ENCODE measurements at regions of chr10 and their contacts with region 1.

Region 1: GRCh38 chr10:128069351-128070051 is 56.7 kb downstream of the MKI67 start:
- DNase-seq: peak; percentile 64 to 89 (median 82)
- ATAC-seq: peak; percentile 36
- H3K4me3 ChIP-seq: no peak overlapping the region
- H3K4me3 Mint-ChIP-seq: no peak overlapping the region
- H3K27ac ChIP-seq: no peak overlapping the region
- H3K27ac Mint-ChIP-seq: no peak overlapping the region
- H3K4me1 ChIP-seq: peaks cover 26% of the 10 kb centered on the region
- H3K4me1 Mint-ChIP-seq: peaks cover 35% of the 10 kb centered on the region
- H3K27me3 ChIP-seq: no peaks in the 10 kb centered on the region
- H3K27me3 Mint-ChIP-seq: no peaks in the 10 kb centered on the region
- CTCF ChIP-seq: peak; percentile 89

Region 2: DNA sequence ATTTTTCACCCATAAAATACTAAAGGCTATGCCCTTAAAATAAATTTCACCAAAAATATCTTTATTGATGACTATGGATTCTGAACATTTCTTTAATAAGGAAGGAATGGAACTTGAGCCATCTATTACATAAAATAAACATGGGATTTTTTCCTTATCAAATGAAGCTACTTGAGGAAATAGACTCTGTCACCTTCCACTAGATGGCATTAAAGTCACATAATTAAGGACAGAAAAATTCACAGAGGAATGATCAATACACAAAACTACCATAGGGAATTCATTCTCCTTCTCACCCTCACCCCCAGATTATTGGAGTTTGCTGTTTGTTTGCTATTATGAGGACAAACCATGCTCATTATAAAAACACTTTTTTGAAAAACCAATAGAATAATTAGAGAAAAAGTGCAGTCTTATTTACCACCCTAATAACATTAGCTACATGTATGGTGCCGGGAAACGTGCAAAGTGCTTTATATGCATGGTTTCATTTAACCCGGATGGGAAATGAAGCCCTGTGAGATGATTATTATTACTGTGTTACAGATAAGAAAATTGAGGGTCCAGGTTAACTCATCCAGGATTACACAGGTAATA is 353.6 kb before region 1 on chr10:
- CTCF ChIA-PET with region 1: interaction called, 4 read pairs
- POLR2A ChIA-PET with region 1: no interaction called
- intact Hi-C with region 1: loop called (anchors 5 kb)
- DNase-seq: peak in 2 of 9 experiments; percentile 13 to 24
- ATAC-seq: no peak
- H3K4me3 ChIP-seq: no peak overlapping the region
- H3K4me3 Mint-ChIP-seq: no peak overlapping the region
- H3K27ac ChIP-seq: no peak overlapping the region
- H3K27ac Mint-ChIP-seq: no peak overlapping the region
- H3K4me1 ChIP-seq: no peaks in the 10 kb centered on the region
- H3K4me1 Mint-ChIP-seq: no peaks in the 10 kb centered on the region
- H3K27me3 ChIP-seq: no peaks in the 10 kb centered on the region
- H3K27me3 Mint-ChIP-seq: peaks cover 2% of the 10 kb centered on the region
- CTCF ChIP-seq: no peak

Region 3: DNA sequence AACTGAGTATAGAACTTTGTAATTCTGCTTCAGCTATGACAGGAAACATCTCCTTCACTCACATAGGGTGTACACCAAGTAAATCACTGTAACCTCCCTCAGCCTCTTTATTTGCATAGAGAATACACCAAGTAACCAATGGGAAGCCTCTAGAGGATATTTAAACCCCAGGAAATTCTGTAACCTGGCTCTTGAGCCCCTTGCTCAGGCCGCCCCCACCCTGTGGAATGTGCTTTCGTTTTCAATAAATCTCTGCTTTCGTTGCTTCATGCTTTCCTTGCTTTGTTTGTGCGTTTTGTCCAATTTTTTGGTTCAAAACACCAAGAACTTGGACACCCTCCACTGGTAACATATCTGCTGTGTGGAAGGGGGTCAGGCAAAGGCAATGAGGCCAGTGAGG is 237.0 kb before region 1 on chr10:
- CTCF ChIA-PET with region 1: no interaction called
- POLR2A ChIA-PET with region 1: no interaction called
- intact Hi-C with region 1: no loop called
- DNase-seq: peak in 1 of 9 experiments; percentile 5
- ATAC-seq: no peak
- H3K4me3 ChIP-seq: no peak overlapping the region
- H3K4me3 Mint-ChIP-seq: no peak overlapping the region
- H3K27ac ChIP-seq: no peak overlapping the region
- H3K27ac Mint-ChIP-seq: no peak overlapping the region
- H3K4me1 ChIP-seq: no peaks in the 10 kb centered on the region
- H3K4me1 Mint-ChIP-seq: no peaks in the 10 kb centered on the region
- H3K27me3 ChIP-seq: no peaks in the 10 kb centered on the region
- H3K27me3 Mint-ChIP-seq: peaks cover 10% of the 10 kb centered on the region
- CTCF ChIP-seq: no peak

Region 4: DNA sequence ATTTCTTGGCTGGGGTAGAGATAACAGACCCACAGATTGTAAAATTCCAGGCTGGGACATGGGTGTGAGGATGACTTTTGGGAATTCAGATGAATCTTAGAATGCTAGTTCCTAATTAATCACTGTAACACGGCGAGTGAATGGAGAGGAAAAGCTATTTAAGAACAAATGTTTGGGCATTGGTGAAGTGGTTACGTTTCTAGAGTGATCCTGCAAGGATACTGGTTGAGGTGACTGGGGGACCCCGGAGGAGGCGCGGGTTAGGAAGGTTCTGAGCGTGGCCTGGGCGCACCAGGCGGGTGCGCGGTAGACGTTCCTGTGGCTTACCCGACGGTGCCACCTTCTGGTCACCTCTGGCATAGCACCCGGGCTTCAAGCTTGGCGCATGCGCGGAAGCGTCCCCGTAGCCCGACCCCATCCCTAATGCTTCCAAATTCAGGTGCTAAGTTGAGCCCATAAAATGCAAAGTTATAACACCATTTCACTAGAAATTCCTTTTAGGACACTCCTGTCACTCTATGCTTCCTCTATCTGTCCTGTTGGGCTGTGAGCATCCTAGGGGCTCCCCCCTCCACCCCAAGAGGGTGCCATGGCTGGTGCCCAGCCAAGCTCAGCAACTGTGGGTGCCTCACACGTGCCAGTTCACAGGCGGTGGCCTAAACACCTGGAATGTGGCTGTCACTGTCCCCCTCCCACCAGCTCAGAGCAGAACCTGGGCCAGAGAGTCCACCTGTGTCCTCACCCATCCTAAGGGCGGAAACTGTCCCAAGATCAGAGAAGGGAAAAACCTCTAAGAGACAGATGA is 58.1 kb before region 1 on chr10:
- CTCF ChIA-PET with region 1: interaction called, 54 read pairs
- POLR2A ChIA-PET with region 1: interaction called, 3 read pairs
- intact Hi-C with region 1: loop called in 1 of 2 experiments (anchors 1 kb)
- DNase-seq: peak; percentile 78 to 94 (median 88)
- ATAC-seq: peak; percentile 100
- H3K4me3 ChIP-seq: no peak overlapping the region
- H3K4me3 Mint-ChIP-seq: peak overlapping the region; percentile 15
- H3K27ac ChIP-seq: no peak overlapping the region
- H3K27ac Mint-ChIP-seq: no peak overlapping the region
- H3K4me1 ChIP-seq: peaks cover 6% of the 10 kb centered on the region
- H3K4me1 Mint-ChIP-seq: peaks cover 8% of the 10 kb centered on the region
- H3K27me3 ChIP-seq: no peaks in the 10 kb centered on the region
- H3K27me3 Mint-ChIP-seq: peaks cover 3% of the 10 kb centered on the region
- CTCF ChIP-seq: peak; percentile 88

Region 5: DNA sequence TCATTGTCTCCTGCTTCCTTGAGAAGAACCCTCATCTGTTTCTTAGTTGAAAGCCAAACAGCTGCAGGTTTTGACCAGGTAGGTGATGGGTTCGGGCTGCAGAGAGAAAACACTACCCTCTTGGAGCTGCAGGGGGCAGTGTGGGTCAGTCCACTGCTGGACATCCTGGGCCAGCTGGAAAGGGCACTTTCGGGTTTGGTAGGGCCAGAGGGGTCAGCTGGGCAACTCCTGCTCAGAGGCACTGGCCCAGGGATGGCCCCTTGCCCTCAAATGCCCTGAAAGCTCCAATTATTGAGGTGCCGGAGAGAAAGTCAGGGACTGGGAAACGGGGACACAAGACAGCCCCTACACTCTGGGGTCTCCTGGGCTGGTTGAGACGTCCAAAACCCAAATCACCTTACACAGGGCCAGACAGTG is 33.9 kb before region 1 on chr10:
- CTCF ChIA-PET with region 1: interaction called, 396 read pairs
- POLR2A ChIA-PET with region 1: interaction called, 21 read pairs
- intact Hi-C with region 1: loop called (anchors 1 kb)
- DNase-seq: peak; percentile 40 to 78 (median 70)
- ATAC-seq: peak; percentile 78
- H3K4me3 ChIP-seq: no peak overlapping the region
- H3K4me3 Mint-ChIP-seq: no peak overlapping the region
- H3K27ac ChIP-seq: no peak overlapping the region
- H3K27ac Mint-ChIP-seq: no peak overlapping the region
- H3K4me1 ChIP-seq: no peaks in the 10 kb centered on the region
- H3K4me1 Mint-ChIP-seq: no peaks in the 10 kb centered on the region
- H3K27me3 ChIP-seq: no peaks in the 10 kb centered on the region
- H3K27me3 Mint-ChIP-seq: no peaks in the 10 kb centered on the region
- CTCF ChIP-seq: peak; percentile 73

Region 6: DNA sequence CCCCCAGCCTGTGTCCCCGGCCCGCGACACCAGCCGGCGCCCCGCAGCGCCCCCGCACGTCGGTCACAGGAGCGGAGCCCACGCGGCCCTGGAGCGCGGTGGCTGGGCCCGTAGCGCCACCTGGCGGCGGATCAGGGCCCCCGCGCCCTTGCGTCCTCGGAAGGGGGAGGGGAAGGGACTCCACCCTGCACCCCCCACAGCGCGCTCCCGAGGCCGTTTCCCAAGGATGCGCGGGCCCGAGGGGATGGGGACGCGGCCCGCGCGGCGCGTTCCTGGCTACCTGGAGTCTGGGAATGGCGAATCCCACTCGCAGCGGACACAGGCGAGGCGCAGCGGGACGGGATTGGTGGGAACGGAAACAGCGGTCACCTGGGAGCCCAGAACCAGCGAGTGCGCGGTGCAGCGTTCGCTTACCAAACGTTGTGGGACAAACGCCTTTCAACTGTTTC is 80.6 kb after region 1 on chr10:
- CTCF ChIA-PET with region 1: interaction called, 13 read pairs
- POLR2A ChIA-PET with region 1: no interaction called
- intact Hi-C with region 1: no loop called
- DNase-seq: peak; percentile 54 to 91 (median 80)
- ATAC-seq: peak; percentile 98
- H3K4me3 ChIP-seq: peak overlapping the region; percentile 66 to 83
- H3K4me3 Mint-ChIP-seq: peak overlapping the region; percentile 73
- H3K27ac ChIP-seq: no peak overlapping the region
- H3K27ac Mint-ChIP-seq: no peak overlapping the region
- H3K4me1 ChIP-seq: peaks cover 4% of the 10 kb centered on the region
- H3K4me1 Mint-ChIP-seq: peaks cover 2% of the 10 kb centered on the region
- H3K27me3 ChIP-seq: no peaks in the 10 kb centered on the region
- H3K27me3 Mint-ChIP-seq: no peaks in the 10 kb centered on the region
- CTCF ChIP-seq: peak; percentile 91

Measured in CD8-positive, alpha-beta T cell (primary cell).